A673 (cell line): ENCODE measurements at regions of chr21 and their contacts with region 1.

Region 1: DNA sequence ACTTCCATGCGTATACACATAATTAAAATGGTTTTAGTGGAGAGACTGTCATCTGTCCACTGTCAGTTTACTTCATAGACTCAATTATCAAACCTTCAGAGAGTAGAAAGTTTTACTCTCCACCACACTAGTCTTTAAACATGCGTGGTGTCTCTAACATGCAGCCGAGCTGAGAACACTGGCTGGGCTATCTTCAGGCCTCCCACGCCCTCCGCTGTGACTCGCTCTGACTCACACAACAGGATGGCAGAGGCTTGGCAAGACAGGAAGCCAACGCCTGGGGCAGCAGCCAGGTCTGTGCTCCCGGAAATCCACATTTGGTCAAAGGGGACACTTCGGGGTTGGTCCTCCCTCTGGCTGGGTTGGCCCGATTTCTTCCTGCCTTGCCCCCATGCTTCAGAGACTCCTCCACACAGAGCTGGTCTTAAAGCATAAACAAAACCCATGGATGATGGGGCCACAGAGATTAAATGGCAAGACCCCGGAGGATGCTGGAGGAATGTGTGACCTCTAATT is 22.7 kb upstream of the IFNGR2 start:
- DNase-seq: peak; percentile 93
- H3K4me3 ChIP-seq: no peak overlapping the region
- H3K27ac ChIP-seq: peak overlapping the region; percentile 44
- H3K4me1 ChIP-seq: peaks cover 21% of the 10 kb centered on the region
- H3K27me3 ChIP-seq: no peaks in the 10 kb centered on the region
- CTCF ChIP-seq: no peak

Region 2: DNA sequence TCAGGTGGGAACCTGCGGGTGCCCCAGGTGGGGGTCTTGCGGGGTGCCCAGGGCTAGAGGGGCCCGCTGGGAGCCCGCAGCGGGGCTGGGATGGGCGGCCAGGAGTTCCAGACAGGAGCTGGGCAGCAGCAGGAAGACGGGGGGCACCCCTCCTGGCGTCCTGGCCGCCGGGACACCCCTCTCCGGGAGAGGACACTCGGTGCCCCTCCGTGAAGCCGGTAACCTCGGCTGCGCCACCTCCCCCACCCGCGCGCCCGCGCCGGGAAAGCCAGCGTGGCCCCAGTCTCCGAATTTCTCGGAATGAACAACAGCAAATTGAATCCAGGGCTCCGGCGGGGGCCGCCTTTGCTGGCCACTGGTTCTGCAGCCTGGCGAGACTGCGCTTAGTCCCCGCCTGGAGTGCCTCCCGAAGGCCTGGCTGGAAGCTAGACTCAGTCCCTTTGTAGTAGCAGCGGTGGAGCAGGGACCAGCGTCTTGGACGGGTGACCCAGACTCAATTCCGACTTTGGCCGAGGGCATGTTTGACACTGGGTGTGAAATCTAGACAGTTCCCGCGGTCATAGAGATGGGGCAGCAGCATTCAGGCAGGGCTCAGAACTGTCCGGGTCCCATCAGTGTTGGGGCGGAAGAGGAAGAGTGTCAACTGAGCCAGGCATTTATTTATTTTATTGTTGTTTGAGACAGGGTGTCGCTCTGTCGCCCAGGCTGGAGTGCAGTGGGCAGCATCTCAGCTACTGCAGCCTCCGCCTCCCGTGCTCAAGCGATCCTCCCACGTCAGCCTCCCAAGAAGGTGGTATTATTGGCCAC is 23.4 kb after region 1 on chr21:
- CTCF ChIA-PET with region 1: no interaction called
- POLR2A ChIA-PET with region 1: no interaction called
- intact Hi-C with region 1: loop called (anchors 2 kb)
- DNase-seq: peak; percentile 42
- H3K4me3 ChIP-seq: peak overlapping the region; percentile 89
- H3K27ac ChIP-seq: peak overlapping the region; percentile 92
- H3K4me1 ChIP-seq: peaks cover 18% of the 10 kb centered on the region
- H3K27me3 ChIP-seq: no peaks in the 10 kb centered on the region
- CTCF ChIP-seq: no peak

Region 3: GRCh38 chr21:33479679-33480480 is 99.3 kb after region 1 on chr21 and contains the start of gene TMEM50B:
- CTCF ChIA-PET with region 1: no interaction called
- POLR2A ChIA-PET with region 1: no interaction called
- intact Hi-C with region 1: no loop called
- DNase-seq: peak; percentile 98
- H3K4me3 ChIP-seq: peak within 1 kb of the TSS; percentile 75
- H3K27ac ChIP-seq: peak within 1 kb of the TSS; percentile 79
- H3K4me1 ChIP-seq: peaks cover 7% of the 10 kb centered on the region
- H3K27me3 ChIP-seq: no peaks in the 10 kb centered on the region
- CTCF ChIP-seq: peak; percentile 46
- total RNA-seq, gene TMEM50B: 18.9 and 19.1 TPM in 2 replicates